Activated CD4-positive, alpha-beta memory T cell treated with anti-CD3 and anti-CD28 coated beads for 36 hours (primary cell): ENCODE measurements at regions of chr15 and their contacts with region 1.

Region 1: GRCh38 chr15:67150028-67150860 is 84.8 kb downstream of the SMAD3 start:
- DNase-seq: peak; percentile 76
- H3K4me3 Mint-ChIP-seq: peak overlapping the region; percentile 62
- H3K27ac Mint-ChIP-seq: peak overlapping the region; percentile 85
- H3K4me1 Mint-ChIP-seq: peaks cover 73% of the 10 kb centered on the region
- H3K27me3 Mint-ChIP-seq: no peaks in the 10 kb centered on the region

Region 2: DNA sequence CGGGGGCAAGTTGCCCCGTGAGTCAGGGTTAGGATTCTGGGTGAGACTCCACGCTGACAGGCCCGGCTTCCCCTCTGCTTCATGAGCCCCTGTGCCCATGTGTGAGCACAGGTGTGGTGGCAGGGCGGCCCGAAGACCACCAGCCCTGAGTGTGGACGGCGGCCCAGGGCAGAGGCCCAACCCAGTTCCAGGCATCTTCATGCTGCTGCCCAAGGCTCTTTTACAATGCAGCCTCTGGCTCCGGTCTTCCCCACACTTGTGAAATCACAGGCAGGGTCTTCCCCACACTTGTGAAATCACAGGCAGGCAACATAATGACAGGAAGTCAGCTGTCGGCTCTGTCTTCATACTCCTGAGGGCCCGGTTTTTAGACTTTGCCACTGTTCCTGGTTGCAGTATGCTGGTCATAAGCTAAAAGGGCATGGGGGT is 25.4 kb after region 1 on chr15:
- CTCF ChIA-PET with region 1: no interaction called
- POLR2A ChIA-PET with region 1: no interaction called
- intact Hi-C with region 1: loop called (anchors 1 kb)
- DNase-seq: peak; percentile 77
- H3K4me3 Mint-ChIP-seq: no peak overlapping the region
- H3K27ac Mint-ChIP-seq: peak overlapping the region; percentile 79
- H3K4me1 Mint-ChIP-seq: peaks cover 65% of the 10 kb centered on the region
- H3K27me3 Mint-ChIP-seq: no peaks in the 10 kb centered on the region

Region 3: DNA sequence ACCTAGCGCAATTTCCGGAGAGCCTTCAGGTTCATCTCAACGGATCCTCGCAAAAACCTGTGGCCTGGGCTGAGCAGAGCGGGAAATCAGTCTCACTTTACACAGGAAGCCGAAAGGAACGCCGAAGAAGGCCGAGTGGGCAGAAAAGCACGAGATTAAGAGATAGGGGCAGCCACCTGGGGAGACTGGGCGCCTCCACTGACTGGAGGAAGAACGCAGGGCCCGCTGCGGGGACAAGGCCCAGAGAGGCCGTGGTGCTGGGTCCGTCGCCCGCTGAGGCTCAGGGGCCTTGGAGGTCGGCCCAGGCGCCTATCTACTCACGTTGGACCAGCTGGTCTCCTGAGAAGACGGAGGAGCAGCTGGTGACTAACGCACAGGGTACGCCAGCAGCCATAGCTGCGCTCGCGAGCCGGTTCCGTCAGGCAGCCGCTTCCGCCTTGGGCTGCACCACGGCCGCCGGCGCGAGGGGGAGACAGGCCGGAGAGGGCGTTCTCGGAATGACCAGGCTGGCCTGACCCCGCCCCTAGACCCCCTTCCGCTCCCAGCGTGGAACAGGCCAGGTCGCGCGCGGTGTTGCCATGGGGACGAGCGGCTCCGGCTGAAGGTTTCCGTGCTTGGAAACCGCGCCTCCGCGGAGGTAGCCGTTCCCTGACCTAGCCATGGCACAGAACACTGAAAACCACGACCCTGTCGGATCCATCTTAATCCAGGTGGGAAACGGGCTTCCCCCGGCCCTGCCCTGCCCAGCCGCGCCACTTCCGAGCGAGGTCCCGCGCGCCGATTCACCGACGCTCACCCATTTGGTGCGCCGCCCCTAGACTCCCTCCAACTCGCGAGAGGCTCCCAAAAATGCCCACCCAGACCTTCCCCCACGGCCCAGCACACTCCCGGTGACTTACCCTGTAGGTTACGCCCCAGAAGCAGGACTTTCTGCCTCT is 104.3 kb after region 1 on chr15 and contains the starts of genes AAGAB and IQCH:
- CTCF ChIA-PET with region 1: no interaction called
- POLR2A ChIA-PET with region 1: no interaction called
- intact Hi-C with region 1: loop called (anchors 1 kb)
- DNase-seq: peak; percentile 99
- H3K4me3 Mint-ChIP-seq: peak within 1 kb of the TSS; percentile 99
- H3K27ac Mint-ChIP-seq: peak within 1 kb of the TSS; percentile 97
- H3K4me1 Mint-ChIP-seq: peaks cover 40% of the 10 kb centered on the region
- H3K27me3 Mint-ChIP-seq: no peaks in the 10 kb centered on the region
- total RNA-seq, gene AAGAB: 52.3 to 57.0 TPM
- total RNA-seq, gene IQCH: 1.6 to 2.8 TPM